CD4-positive, alpha-beta T cell (primary cell): ENCODE measurements at regions of chr21 and their contacts with region 1.

Region 1: DNA sequence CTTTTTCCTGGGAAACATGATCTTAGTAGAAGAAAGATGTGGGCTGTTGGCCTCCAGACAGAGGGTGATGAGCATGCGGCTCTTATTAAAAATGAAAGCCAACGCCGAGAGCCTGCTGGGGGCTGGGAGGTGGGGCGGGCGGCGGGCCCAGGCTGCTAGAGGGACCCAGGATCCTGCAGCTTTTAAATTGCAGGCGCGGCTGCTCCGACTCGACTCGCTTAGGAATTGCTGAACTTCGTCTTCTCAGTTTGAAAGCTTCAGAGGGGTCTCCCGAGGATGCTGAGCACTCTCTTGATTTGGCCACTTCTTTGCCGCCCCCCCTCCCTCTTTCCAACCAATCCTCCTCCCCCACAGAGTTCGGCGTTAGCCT is 1.2 kb downstream of the AGPAT3 start:
- DNase-seq: peak in 8 of 14 experiments; percentile 7 to 66 (median 43)
- ATAC-seq: peak; percentile 42
- H3K4me3 ChIP-seq: peak overlapping the region; percentile 52
- H3K4me3 Mint-ChIP-seq: peak overlapping the region; percentile 88
- H3K27ac ChIP-seq: peak overlapping the region; percentile 65 to 67
- H3K27ac Mint-ChIP-seq: peak overlapping the region; percentile 91
- H3K4me1 ChIP-seq: peaks cover 40% of the 10 kb centered on the region
- H3K4me1 Mint-ChIP-seq: peaks cover 44% of the 10 kb centered on the region
- H3K27me3 ChIP-seq: no peaks in the 10 kb centered on the region
- H3K27me3 Mint-ChIP-seq: no peaks in the 10 kb centered on the region
- CTCF ChIP-seq: no peak

Region 2: DNA sequence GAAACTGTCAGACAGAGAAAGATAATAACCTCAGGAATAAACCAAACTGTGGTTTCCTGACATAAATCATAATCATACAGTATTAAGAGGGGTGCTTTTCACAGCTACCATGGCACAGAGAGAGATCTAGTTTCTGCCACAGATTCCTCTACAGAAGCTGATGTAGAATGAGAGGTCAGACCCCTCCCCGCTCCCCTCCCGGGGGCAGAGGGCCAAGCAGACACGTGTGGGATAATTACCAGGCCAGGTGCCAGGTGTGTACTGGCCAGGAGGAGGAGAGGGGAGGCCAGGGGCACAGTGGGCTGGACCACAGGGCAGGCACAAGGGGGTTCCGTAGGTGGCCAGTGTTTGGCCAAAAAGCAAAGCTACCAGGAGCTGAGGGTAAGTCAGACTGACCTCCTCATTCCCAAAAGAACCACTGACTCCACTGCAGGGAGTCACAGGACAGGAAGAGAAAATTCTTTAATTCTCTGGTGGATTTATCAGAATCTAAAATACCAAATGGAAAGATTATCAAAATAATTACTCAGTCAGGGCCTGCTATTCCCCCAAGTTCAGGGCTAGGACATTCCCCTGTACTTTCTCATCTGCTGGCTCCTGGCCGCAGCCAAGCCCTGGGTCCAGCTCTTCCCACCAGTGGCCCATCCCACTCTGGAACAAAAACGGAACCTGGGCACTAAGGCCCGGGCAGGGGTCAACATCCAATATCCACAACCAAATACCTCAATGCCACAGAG is 1942.4 kb before region 1 on chr21:
- CTCF ChIA-PET with region 1: no interaction called
- POLR2A ChIA-PET with region 1: no interaction called
- intact Hi-C with region 1: no loop called
- DNase-seq: no peak
- ATAC-seq: no peak
- H3K4me3 ChIP-seq: no peak overlapping the region
- H3K4me3 Mint-ChIP-seq: peak overlapping the region; percentile 85
- H3K27ac ChIP-seq: no peak overlapping the region
- H3K27ac Mint-ChIP-seq: peak overlapping the region; percentile 95
- H3K4me1 ChIP-seq: peaks cover 47% of the 10 kb centered on the region
- H3K4me1 Mint-ChIP-seq: peaks cover 61% of the 10 kb centered on the region
- H3K27me3 ChIP-seq: no peaks in the 10 kb centered on the region
- H3K27me3 Mint-ChIP-seq: no peaks in the 10 kb centered on the region
- CTCF ChIP-seq: no peak

Region 3: DNA sequence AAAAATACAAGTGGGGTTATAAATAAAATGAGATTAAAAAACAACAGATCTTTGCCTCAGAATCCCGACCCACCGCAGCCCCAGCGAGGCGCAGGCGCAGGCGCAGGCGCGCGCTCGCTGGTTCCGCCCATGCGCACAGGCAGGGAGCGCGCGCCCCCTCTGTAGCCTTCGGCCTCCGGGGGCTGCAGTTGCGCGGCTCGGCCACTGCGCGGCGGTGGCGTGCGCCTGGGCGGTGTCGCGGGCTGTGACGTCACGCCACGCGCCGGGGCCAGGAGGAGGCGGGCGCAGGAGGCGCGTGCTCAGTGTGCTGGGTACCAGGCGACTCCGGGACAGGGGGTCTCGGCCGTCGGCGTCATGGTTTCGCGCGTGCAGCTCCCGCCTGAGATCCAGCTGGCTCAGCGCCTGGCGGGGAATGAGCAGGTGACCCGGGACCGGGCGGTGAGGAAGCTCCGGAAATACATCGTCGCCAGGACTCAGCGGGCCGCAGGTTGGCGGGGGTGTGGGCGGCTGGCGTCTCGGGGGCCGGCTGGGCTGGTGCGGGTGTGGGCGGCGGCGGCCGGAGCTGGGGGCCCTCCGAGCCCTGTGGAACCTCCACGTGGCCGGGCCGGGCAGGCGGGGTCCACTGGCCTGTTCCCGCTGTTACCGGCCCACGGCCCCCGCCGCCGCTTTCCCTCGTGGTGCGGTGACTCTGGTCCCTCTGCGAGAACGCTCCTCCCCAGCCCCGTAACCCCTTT is 76.8 kb before region 1 on chr21 and contains the start of gene RRP1:
- CTCF ChIA-PET with region 1: no interaction called
- POLR2A ChIA-PET with region 1: no interaction called
- intact Hi-C with region 1: loop called in 1 of 2 experiments (anchors 5 kb)
- DNase-seq: peak; percentile 85 to 98 (median 94)
- ATAC-seq: peak; percentile 93
- H3K4me3 ChIP-seq: peak within 1 kb of the TSS; percentile 76
- H3K4me3 Mint-ChIP-seq: peak within 1 kb of the TSS; percentile 95
- H3K27ac ChIP-seq: peak within 1 kb of the TSS; percentile 44 to 55
- H3K27ac Mint-ChIP-seq: peak within 1 kb of the TSS; percentile 84
- H3K4me1 ChIP-seq: peaks cover 27% of the 10 kb centered on the region
- H3K4me1 Mint-ChIP-seq: peaks cover 18% of the 10 kb centered on the region
- H3K27me3 ChIP-seq: no peaks in the 10 kb centered on the region
- H3K27me3 Mint-ChIP-seq: no peaks in the 10 kb centered on the region
- CTCF ChIP-seq: peak; percentile 92
- total RNA-seq, gene RRP1: 27.7 to 29.0 TPM

Region 4: DNA sequence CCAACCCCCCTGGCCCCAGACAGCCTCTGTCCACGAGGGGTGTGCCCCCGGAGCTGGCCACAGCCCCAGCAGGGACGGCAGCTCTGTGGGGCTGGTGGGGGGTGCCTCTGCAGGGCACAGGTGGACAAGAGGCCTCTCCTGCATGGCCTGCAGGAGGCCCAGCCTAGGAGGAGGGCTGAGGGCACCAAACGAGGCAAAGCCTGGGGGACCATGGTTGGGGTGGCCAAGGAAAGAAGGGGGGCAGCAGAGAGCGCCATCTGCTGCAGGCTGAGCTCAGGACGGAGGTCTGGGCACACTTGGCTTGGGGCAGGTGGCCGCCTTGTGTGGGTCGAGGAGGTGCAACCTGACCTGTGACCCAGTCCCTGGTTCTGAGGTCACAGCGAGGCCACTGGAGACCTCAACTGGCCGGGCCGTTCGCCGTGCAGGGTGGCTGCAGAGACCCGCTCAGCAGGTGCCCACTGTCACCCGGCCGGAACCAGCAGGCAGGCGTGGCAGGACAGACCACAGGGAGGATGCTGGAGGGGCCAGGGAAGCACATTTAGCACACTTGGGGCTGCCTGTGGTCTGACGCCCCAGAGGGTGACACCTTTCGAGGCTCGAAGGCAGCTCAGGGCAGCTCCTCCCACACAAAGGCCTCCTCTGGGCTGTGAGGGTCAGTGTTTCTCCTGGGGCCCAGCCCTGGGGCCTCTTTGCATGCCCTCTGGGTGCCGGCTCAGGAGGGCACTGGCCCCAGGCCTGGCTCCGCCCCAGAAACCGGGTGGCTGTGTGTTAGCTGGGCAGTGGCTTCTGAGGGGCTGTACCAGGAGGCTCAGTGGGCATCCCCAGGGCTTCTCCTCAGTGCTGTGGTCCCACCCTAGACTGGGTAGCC is 49.4 kb before region 1 on chr21:
- CTCF ChIA-PET with region 1: no interaction called
- POLR2A ChIA-PET with region 1: no interaction called
- intact Hi-C with region 1: loop called in 1 of 2 experiments (anchors 5 kb)
- DNase-seq: peak in 1 of 14 experiments; percentile 3
- ATAC-seq: no peak
- H3K4me3 ChIP-seq: no peak overlapping the region
- H3K4me3 Mint-ChIP-seq: no peak overlapping the region
- H3K27ac ChIP-seq: no peak overlapping the region
- H3K27ac Mint-ChIP-seq: no peak overlapping the region
- H3K4me1 ChIP-seq: peaks cover 18% of the 10 kb centered on the region
- H3K4me1 Mint-ChIP-seq: peaks cover 8% of the 10 kb centered on the region
- H3K27me3 ChIP-seq: no peaks in the 10 kb centered on the region
- H3K27me3 Mint-ChIP-seq: no peaks in the 10 kb centered on the region
- CTCF ChIP-seq: no peak

Region 5: DNA sequence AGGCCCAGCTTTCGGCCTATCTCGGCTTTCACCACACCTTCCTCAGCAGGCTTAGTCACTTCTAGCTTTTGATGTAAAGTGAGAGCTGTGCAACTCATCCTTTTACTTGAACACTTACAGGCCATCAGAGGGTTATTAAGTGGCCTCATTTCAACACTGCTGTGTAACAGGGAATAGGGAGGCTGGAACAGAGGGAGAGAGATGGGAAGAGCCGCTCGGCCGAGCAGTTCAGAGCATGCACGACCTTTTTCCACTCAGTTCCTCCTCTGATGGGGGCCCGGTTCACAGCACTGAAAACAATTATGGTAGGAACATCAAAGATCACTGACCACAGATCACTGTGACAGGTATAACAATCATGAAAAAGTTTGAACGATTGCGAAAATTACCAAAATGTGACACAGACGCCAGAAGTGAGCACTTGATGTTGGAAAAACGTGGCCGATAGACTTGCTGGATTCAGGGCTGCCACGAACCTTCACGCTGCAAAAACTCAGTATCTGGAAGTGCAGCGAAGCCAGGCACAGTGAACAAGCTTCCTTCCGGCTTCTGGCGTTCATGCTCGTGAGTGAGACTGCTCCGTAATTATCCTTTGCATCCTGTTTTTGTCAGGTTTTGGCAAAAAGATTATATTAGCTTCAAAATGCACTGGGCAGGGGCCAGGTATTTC is 27.4 kb after region 1 on chr21:
- CTCF ChIA-PET with region 1: interaction called, 3 read pairs
- POLR2A ChIA-PET with region 1: no interaction called
- intact Hi-C with region 1: loop called in 1 of 2 experiments (anchors 2 kb)
- DNase-seq: peak in 3 of 14 experiments; percentile 34 to 41 (median 38)
- ATAC-seq: peak; percentile 64
- H3K4me3 ChIP-seq: peak overlapping the region; percentile 36
- H3K4me3 Mint-ChIP-seq: peak overlapping the region; percentile 32
- H3K27ac ChIP-seq: no peak overlapping the region
- H3K27ac Mint-ChIP-seq: peak overlapping the region; percentile 29
- H3K4me1 ChIP-seq: peaks cover 21% of the 10 kb centered on the region
- H3K4me1 Mint-ChIP-seq: peaks cover 49% of the 10 kb centered on the region
- H3K27me3 ChIP-seq: no peaks in the 10 kb centered on the region
- H3K27me3 Mint-ChIP-seq: no peaks in the 10 kb centered on the region
- CTCF ChIP-seq: no peak

Region 6: GRCh38 chr21:43916691-43917514 is 50.7 kb after region 1 on chr21:
- CTCF ChIA-PET with region 1: interaction called, 3 read pairs
- POLR2A ChIA-PET with region 1: interaction called, 8 read pairs
- intact Hi-C with region 1: loop called (anchors 1 to 5 kb)
- DNase-seq: peak; percentile 51 to 85 (median 67)
- ATAC-seq: peak; percentile 89
- H3K4me3 ChIP-seq: peak overlapping the region; percentile 62
- H3K4me3 Mint-ChIP-seq: peak overlapping the region; percentile 85
- H3K27ac ChIP-seq: peak overlapping the region; percentile 78 to 87
- H3K27ac Mint-ChIP-seq: peak overlapping the region; percentile 95
- H3K4me1 ChIP-seq: peaks cover 42% of the 10 kb centered on the region
- H3K4me1 Mint-ChIP-seq: peaks cover 74% of the 10 kb centered on the region
- H3K27me3 ChIP-seq: no peaks in the 10 kb centered on the region
- H3K27me3 Mint-ChIP-seq: no peaks in the 10 kb centered on the region
- CTCF ChIP-seq: no peak

Region 7: DNA sequence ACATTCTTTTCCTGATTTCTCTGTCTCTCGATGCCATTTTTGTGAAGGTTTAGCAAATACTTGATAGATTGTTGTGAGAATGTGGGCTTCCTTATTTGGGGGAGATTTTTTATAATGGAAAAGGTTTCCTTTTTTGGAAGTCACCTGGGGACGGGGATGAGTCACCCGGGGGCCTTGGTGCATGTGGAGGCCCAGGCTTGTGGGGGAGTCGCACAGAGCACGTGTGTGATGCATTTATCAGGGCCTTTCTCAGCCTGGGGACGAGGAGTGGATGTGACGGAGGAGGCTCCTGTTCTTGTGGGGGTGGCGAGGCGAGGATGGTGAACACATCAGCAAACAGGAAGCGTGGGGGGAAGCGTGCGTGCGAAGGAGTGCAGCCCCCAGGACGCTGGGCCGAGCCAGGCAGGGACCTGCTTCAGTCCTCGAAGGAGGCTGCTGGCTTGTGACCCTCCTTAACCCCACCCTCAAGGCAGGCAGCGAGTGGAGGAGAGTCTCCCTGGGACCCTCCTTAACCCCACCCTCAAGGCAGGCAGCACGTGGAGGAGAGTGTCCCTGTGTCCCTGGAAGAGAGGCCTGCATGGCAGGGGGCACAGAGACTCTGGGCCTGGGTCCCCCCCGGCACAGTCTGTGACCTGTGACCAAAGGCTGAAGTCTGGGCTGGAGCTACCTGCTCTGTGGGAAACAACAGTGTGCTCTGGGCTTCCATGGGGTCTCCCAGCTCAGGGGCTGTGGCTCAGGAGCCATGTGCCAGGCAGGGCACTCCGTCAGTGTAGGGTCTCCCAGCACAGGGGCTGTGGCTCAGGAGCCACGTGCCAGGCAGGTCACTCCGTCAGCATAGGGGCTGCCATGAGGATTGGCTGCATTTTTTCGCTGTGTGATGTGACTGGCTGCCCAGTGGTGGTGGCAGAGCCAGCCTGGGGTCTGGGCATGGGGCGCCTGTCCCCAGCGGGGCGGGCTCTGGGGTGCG is 56.0 kb after region 1 on chr21:
- CTCF ChIA-PET with region 1: interaction called, 3 read pairs
- POLR2A ChIA-PET with region 1: interaction called, 8 read pairs
- intact Hi-C with region 1: loop called (anchors 1 to 5 kb)
- DNase-seq: peak; percentile 24 to 76 (median 60)
- ATAC-seq: peak; percentile 71
- H3K4me3 ChIP-seq: peak overlapping the region; percentile 8
- H3K4me3 Mint-ChIP-seq: peak overlapping the region; percentile 71
- H3K27ac ChIP-seq: peak overlapping the region in 1 of 2 donors; percentile 1
- H3K27ac Mint-ChIP-seq: peak overlapping the region; percentile 87
- H3K4me1 ChIP-seq: peaks cover 51% of the 10 kb centered on the region
- H3K4me1 Mint-ChIP-seq: peaks cover 48% of the 10 kb centered on the region
- H3K27me3 ChIP-seq: no peaks in the 10 kb centered on the region
- H3K27me3 Mint-ChIP-seq: no peaks in the 10 kb centered on the region
- CTCF ChIP-seq: no peak

Region 8: DNA sequence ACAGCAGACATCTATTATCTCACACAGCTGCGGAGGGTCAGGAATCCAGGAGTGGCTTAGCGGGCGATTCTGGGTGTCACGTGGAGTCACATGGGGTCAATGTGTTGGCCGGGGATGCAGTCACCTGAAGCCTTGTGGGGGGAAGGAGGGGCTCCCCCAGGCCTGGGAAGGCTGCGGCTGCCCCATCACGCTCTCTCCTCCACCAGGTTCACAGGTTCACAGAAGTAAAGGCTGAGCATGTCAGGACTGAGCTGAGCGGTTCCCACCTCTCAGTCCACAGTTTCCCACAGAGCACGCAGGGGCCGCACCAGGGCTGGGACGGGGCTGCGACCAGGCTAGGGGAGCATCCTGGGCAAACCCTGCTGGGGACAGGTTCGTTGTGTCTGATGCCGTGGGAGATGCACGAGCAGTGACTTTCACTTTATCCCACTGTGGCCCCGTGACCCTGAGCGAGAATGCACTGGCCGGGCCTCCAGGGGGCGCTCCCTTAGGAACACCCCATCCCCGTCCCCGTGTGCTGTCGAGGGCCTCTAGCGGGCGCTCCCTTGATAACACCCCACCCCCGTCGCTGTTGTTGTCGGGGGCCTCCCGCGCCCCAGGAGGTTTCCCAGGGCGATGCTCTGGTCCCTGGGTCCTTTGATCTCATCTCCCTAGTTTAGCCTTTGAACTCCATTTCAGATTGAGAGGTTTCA is 72.7 kb after region 1 on chr21:
- CTCF ChIA-PET with region 1: interaction called, 3 read pairs
- POLR2A ChIA-PET with region 1: no interaction called
- intact Hi-C with region 1: loop called in 1 of 2 experiments (anchors 1 kb)
- DNase-seq: peak; percentile 86 to 94 (median 90)
- ATAC-seq: peak; percentile 100
- H3K4me3 ChIP-seq: peak overlapping the region; percentile 62
- H3K4me3 Mint-ChIP-seq: peak overlapping the region; percentile 88
- H3K27ac ChIP-seq: peak overlapping the region in 1 of 2 donors; percentile 12
- H3K27ac Mint-ChIP-seq: peak overlapping the region; percentile 82
- H3K4me1 ChIP-seq: peaks cover 20% of the 10 kb centered on the region
- H3K4me1 Mint-ChIP-seq: peaks cover 19% of the 10 kb centered on the region
- H3K27me3 ChIP-seq: no peaks in the 10 kb centered on the region
- H3K27me3 Mint-ChIP-seq: no peaks in the 10 kb centered on the region
- CTCF ChIP-seq: peak; percentile 99